ENCODE measurements at regions of chr1 and their contacts with region 1.

Region 1: GRCh38 chr1:156689035-156689952 is 12.1 kb upstream of the NES start:
- DNase-seq: peak; percentile 86
- ATAC-seq: peak; percentile 98
- H3K4me3 Mint-ChIP-seq: no peak overlapping the region
- H3K27ac Mint-ChIP-seq: no peak overlapping the region
- H3K4me1 Mint-ChIP-seq: peaks cover 29% of the 10 kb centered on the region
- H3K27me3 Mint-ChIP-seq: peaks cover 51% of the 10 kb centered on the region
- CTCF ChIP-seq: peak; percentile 95

Region 2: GRCh38 chr1:156308078-156308477 is 381.2 kb before region 1 on chr1:
- CTCF ChIA-PET with region 1: no interaction called
- POLR2A ChIA-PET with region 1: no interaction called
- intact Hi-C with region 1: no loop called
- DNase-seq: no peak
- ATAC-seq: no peak
- H3K4me3 Mint-ChIP-seq: no peak overlapping the region
- H3K27ac Mint-ChIP-seq: no peak overlapping the region
- H3K4me1 Mint-ChIP-seq: peaks cover 2% of the 10 kb centered on the region
- H3K27me3 Mint-ChIP-seq: no peaks in the 10 kb centered on the region
- CTCF ChIP-seq: no peak

Region 3: GRCh38 chr1:156618853-156619581 is 70.3 kb before region 1 on chr1 and contains the start of gene HAPLN2:
- CTCF ChIA-PET with region 1: interaction called, 20 read pairs
- POLR2A ChIA-PET with region 1: no interaction called
- intact Hi-C with region 1: no loop called
- DNase-seq: peak; percentile 37
- ATAC-seq: no peak
- H3K4me3 Mint-ChIP-seq: no peak within 1 kb of the TSS
- H3K27ac Mint-ChIP-seq: no peak within 1 kb of the TSS
- H3K4me1 Mint-ChIP-seq: peaks cover 4% of the 10 kb centered on the region
- H3K27me3 Mint-ChIP-seq: peaks cover 40% of the 10 kb centered on the region
- CTCF ChIP-seq: no peak
- total RNA-seq, gene HAPLN2: not detected

Region 4: DNA sequence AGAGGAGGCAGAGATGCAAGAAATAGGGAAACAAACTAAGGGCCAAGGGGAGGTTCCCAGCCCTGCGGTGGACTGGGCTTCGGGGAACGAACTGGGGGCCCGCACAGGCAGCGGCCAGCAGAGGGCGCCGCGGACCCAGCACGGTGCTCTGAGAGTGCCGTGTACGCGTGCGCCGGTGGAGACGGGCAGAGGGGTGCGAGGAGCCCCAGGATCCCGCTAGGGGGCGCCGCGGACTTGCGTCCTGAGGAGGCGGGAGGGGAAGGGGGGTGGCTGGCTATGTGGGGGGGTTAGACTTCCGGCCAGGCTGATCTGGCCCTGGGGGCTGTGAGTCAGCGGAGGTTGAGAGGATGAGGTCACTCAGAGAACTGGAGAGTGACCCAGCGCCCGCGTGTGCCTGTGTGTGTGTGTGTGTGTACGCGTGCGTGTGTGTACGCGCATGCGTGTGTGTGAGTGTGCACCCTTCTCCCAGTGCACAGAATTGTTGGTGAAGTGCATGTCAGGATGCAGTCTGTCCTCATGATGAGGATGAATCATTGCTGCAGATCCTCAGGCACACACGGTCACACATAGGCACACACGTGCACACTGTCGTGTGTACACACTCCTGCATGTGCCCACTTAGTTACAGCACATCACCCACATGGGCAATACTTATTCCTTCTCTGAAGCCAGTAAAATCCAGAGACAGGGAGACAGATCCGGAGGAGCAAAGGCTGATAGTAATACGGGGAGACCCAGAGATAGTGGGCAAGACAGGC is 29.1 kb before region 1 on chr1:
- CTCF ChIA-PET with region 1: interaction called, 69 read pairs
- POLR2A ChIA-PET with region 1: no interaction called
- intact Hi-C with region 1: no loop called
- DNase-seq: peak; percentile 97
- ATAC-seq: peak; percentile 88
- H3K4me3 Mint-ChIP-seq: peak overlapping the region; percentile 75
- H3K27ac Mint-ChIP-seq: peak overlapping the region; percentile 89
- H3K4me1 Mint-ChIP-seq: peaks cover 45% of the 10 kb centered on the region
- H3K27me3 Mint-ChIP-seq: peaks cover 27% of the 10 kb centered on the region
- CTCF ChIP-seq: peak; percentile 98

Region 5: DNA sequence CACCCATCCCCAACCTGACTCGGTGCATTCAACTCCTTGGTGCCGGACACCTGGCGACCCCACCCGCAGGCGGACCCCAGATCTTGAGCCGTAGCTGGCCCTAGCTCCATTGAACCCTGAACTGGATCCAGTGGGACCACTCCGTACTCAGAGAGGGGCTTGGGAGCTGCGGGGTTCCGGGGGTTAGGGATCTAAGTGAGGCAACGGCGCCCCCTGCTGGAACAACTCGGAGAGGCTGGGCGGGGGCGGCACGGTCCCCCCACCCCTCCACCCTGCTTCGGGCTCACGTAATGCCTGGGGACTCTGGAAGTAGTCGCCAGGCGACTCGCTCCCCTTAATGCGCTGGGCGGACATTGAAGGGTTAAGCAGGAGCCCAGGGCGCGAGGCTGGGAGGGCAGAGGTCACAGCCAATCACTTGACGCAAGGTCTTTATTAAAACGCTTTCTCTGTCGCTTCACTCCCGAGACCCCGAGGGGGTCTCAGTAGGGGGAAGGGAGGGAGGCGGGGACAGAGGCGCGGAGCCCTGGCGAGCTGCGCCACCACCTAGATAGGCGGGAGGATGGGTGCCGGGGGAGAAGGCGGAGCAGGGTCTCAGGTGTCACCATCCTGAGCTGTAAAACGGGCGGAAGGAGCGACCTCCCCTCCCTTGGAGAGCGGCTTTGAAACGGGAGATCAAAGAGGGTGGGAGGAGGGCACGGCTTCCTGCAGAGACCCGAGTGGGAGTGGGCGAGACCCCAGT is 16.8 kb after region 1 on chr1:
- CTCF ChIA-PET with region 1: interaction called, 271 read pairs
- POLR2A ChIA-PET with region 1: interaction called, 12 read pairs
- intact Hi-C with region 1: no loop called
- DNase-seq: peak; percentile 87
- ATAC-seq: peak; percentile 67
- H3K4me3 Mint-ChIP-seq: peak overlapping the region; percentile 75
- H3K27ac Mint-ChIP-seq: peak overlapping the region; percentile 75
- H3K4me1 Mint-ChIP-seq: peaks cover 34% of the 10 kb centered on the region
- H3K27me3 Mint-ChIP-seq: peaks cover 19% of the 10 kb centered on the region
- CTCF ChIP-seq: peak; percentile 99

Region 6: DNA sequence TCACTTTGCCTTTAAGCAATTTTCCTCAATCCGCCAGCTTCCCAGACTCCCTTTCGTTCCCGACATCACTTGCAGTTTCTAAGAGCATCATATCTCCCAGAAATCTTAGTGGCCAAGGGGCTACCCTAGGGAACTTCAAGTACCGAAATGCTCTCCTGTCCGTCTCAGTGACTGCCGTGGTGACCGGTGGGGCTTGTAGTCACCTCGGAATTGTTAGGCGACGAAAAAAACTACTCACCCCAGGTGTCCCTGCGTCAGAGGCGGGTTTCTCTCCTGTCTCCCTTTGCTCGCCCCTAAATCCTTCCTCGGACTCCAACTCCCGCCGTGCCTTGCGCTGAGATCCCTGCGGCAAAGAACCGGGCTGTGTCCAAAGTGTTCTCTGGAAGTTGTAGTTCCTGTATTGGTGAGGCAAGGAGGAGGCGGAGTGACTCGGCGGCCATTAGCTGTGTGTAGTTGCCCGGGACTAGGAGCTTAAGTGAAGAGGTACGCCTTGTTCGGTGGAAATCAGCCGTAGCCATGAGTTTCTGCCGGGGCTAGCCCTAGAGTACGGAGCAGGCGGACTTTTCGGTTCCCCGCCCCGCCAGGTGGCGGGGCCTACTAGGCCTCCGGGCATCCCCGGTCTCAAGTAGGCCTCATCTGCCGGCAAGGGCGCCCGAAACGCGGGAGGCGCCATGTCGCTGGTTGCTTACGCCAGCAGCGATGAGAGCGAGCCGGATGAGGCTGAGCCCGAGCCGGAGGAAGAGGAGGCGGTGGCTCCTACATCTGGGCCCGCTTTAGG is 78.0 kb after region 1 on chr1 and contains the start of gene PRCC:
- CTCF ChIA-PET with region 1: interaction called, 14 read pairs
- POLR2A ChIA-PET with region 1: interaction called, 3 read pairs
- intact Hi-C with region 1: no loop called
- DNase-seq: peak; percentile 99
- ATAC-seq: peak; percentile 94
- H3K4me3 Mint-ChIP-seq: no peak within 1 kb of the TSS
- H3K27ac Mint-ChIP-seq: no peak within 1 kb of the TSS
- H3K4me1 Mint-ChIP-seq: peaks cover 34% of the 10 kb centered on the region
- H3K27me3 Mint-ChIP-seq: no peaks in the 10 kb centered on the region
- CTCF ChIP-seq: no peak
- total RNA-seq, gene PRCC: 69.8 to 70.6 TPM

Region 7: GRCh38 chr1:156789621-156790318 is 100.5 kb after region 1 on chr1:
- CTCF ChIA-PET with region 1: interaction called, 11 read pairs
- POLR2A ChIA-PET with region 1: no interaction called
- intact Hi-C with region 1: no loop called
- DNase-seq: no peak
- ATAC-seq: no peak
- H3K4me3 Mint-ChIP-seq: no peak overlapping the region
- H3K27ac Mint-ChIP-seq: no peak overlapping the region
- H3K4me1 Mint-ChIP-seq: peaks cover 3% of the 10 kb centered on the region
- H3K27me3 Mint-ChIP-seq: no peaks in the 10 kb centered on the region
- CTCF ChIP-seq: no peak

Region 8: GRCh38 chr1:156892190-156893047 is 203.1 kb after region 1 on chr1:
- CTCF ChIA-PET with region 1: interaction called, 48 read pairs
- POLR2A ChIA-PET with region 1: no interaction called
- intact Hi-C with region 1: loop called (anchors 10 kb)
- DNase-seq: peak; percentile 95
- ATAC-seq: peak; percentile 96
- H3K4me3 Mint-ChIP-seq: peak overlapping the region; percentile 35
- H3K27ac Mint-ChIP-seq: no peak overlapping the region
- H3K4me1 Mint-ChIP-seq: peaks cover 7% of the 10 kb centered on the region
- H3K27me3 Mint-ChIP-seq: peaks cover 49% of the 10 kb centered on the region
- CTCF ChIP-seq: peak; percentile 76